ENCODE measurements at regions of chr19 and their contacts with region 1.

Region 1: DNA sequence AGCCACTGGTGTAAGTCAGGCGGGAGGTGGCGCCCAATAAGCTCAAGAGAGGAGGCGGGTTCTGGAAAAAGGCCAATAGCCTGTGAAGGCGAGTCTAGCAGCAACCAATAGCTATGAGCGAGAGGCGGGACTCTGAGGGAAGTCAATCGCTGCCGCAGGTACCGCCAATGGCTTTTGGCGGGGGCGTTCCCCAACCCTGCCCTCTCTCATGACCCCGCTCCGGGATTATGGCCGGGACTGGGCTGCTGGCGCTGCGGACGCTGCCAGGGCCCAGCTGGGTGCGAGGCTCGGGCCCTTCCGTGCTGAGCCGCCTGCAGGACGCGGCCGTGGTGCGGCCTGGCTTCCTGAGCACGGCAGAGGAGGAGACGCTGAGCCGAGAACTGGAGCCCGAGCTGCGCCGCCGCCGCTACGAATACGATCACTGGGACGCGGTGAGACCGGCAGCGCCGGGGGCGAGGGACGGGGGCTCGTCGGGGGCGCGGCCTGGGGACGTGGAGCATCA is at the start of gene ALKBH7:
- DNase-seq: peak; percentile 99 to 100 (median 99)
- H3K4me3 ChIP-seq: peak within 1 kb of the TSS; percentile 54 to 98 (median 89)
- H3K4me3 Mint-ChIP-seq: peak within 1 kb of the TSS; percentile 86 to 91
- H3K27ac ChIP-seq: peak within 1 kb of the TSS; percentile 86 to 87
- H3K27ac Mint-ChIP-seq: peak within 1 kb of the TSS; percentile 90 to 98 (median 95)
- H3K4me1 ChIP-seq: peaks cover 11 to 14% of the 10 kb centered on the region in 2 donors
- H3K4me1 Mint-ChIP-seq: peaks cover 12% of the 10 kb centered on the region
- H3K27me3 ChIP-seq: no peaks in the 10 kb centered on the region
- H3K27me3 Mint-ChIP-seq: peaks cover 0 to 3% (median 2%) of the 10 kb centered on the region in 3 donors
- CTCF ChIP-seq: no peak
- polyA plus RNA-seq, gene ALKBH7: 20.9 to 109 (median 86.0) TPM

Region 2: DNA sequence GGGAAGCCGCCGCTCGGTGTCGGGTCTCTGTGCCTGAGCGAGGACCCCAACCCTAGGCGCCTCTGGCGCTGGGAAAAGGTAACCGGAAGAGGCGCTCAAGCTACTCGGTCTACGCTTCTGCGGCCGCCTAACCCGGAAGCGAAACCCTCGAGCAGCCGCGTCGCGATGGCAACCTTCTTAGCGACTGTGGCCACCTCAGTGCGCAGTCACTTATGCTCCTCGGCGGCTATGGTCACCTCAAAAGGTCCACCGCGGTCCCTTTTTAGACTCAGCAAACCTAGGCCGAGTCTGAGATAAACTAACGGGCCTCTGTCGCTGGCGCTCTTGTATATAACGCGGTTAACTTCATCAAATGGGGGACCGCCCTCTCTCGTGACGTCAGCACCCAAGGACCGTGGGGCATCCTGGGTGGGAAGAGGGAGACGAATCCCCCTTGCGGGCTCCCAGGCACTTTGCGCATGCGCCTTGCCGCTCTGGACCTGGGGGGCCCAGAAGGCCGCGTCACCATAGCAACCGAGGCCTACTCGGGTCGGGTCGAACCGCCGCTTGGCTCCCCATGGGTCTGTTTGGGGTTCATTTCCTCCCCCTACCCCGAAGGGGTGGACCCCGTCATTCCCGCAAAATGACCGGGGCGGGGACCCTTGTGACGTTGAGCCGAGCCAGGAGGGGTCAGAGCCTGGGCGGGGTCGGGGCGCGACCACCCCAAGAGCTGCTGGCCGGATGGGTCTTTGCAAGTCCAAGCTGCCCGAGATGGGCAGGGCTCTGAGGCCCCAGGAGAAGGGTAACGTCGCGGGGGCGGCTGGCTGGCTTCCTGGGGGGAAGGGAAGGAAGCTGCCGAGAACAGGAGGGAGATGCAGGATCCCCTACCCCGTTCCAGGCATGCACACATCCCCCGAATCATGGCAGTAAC is 20.7 kb after region 1 on chr19 and contains the start of gene GTF2F1:
- intact Hi-C with region 1: loop called in 1 of 2 experiments (anchors 2 kb)
- DNase-seq: peak; percentile 86 to 92 (median 90)
- H3K4me3 ChIP-seq: peak within 1 kb of the TSS; percentile 48 to 86 (median 62)
- H3K4me3 Mint-ChIP-seq: peak within 1 kb of the TSS; percentile 89 to 94
- H3K27ac ChIP-seq: peak within 1 kb of the TSS; percentile 91 to 92
- H3K27ac Mint-ChIP-seq: peak within 1 kb of the TSS; percentile 96 to 99 (median 97)
- H3K4me1 ChIP-seq: peaks cover 14 to 22% of the 10 kb centered on the region in 2 donors
- H3K4me1 Mint-ChIP-seq: peaks cover 19% of the 10 kb centered on the region
- H3K27me3 ChIP-seq: no peaks in the 10 kb centered on the region
- H3K27me3 Mint-ChIP-seq: peaks cover 0 to 6% (median 4%) of the 10 kb centered on the region in 3 donors
- CTCF ChIP-seq: no peak
- polyA plus RNA-seq, gene GTF2F1: 9.4 to 46.4 (median 13.2) TPM

Region 3: DNA sequence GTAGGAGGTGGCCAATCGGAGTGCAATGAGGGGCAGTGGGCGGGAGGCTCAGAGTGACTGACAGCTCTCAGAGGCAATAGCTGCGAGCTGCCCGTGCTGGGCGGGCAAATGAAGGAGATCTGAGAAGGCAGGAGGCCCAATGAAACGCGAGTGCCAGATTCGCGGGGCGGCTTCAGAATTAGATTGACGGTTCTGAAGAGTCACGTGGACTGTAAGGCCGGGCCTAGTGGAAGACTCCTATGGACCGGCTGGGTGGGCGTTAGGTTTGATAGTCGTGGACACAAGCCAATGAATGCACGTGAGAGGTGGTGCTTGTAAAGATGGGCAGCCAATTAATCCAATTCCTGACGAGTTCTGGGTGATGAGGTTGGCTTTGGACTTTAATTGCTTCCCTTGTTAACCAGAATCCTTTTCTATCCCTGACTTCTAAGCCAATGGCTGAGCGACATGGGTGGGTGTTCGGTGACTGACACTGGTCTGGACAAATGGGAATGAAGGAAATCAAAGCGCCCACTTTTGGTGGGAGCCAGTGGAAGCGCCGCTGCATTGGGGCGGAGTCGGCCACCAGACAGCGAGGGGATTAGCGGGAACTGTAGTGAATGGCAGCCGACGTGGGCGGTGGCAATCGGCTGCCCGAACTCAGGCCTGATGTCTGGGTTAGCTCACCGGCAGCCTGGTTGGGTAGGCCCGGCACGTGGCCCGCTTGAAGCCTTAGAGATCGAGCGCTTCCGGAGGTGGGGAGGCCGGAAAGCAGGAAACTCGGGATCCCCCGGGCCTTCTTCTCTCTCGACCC is 52.5 kb after region 1 on chr19:
- intact Hi-C with region 1: loop called (anchors 5 to 10 kb)
- DNase-seq: peak; percentile 100
- H3K4me3 ChIP-seq: peak overlapping the region in 2 of 3 experiments; percentile 29 to 52
- H3K4me3 Mint-ChIP-seq: peak overlapping the region; percentile 69 to 75
- H3K27ac ChIP-seq: peak overlapping the region; percentile 83 to 85
- H3K27ac Mint-ChIP-seq: peak overlapping the region; percentile 86 to 95 (median 91)
- H3K4me1 ChIP-seq: peaks cover 23 to 34% of the 10 kb centered on the region in 2 donors
- H3K4me1 Mint-ChIP-seq: peaks cover 37% of the 10 kb centered on the region
- H3K27me3 ChIP-seq: no peaks in the 10 kb centered on the region
- H3K27me3 Mint-ChIP-seq: peaks cover 0 to 12% (median 6%) of the 10 kb centered on the region in 3 donors
- CTCF ChIP-seq: no peak

Measured in CD14-positive monocyte (primary cell).